ENCODE measurements at regions of chr12 and their contacts with region 1.

Region 1: DNA sequence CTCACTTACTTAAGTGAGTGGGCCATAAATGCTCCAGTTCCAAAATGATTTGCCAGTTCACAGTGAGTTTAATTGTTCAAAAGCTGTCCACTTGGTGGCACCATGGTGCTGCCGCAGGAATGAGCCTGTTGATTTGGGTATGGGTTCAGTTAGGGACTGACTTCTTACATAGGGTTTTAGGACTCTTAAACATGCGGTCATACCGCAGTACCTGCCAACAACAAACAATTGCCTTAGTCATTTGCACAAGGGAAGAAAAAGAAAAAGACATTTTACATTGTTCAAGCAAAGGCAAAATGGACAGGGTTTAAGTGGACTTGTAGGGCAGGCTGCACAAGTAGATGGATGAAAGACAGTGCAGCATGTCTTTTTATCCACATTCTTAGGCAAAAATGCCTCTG is 80.0 kb upstream of the DBX2 start:
- DNase-seq: peak; percentile 63
- ATAC-seq: peak; percentile 92
- H3K4me3 ChIP-seq: no peak overlapping the region
- H3K27ac ChIP-seq: no peak overlapping the region
- H3K4me1 ChIP-seq: no peaks in the 10 kb centered on the region
- H3K27me3 ChIP-seq: peaks cover 9% of the 10 kb centered on the region
- CTCF ChIP-seq: peak; percentile 73
- POLR2A ChIP-seq: no peak
- RAD21 ChIP-seq: peak; percentile 88

Region 2: GRCh38 chr12:45170456-45171042 is 39.7 kb after region 1 on chr12:
- CTCF ChIA-PET with region 1: no interaction called
- POLR2A ChIA-PET with region 1: no interaction called
- dilution Hi-C with region 1: no loop called
- in situ Hi-C with region 1: no loop called
- intact Hi-C with region 1: no loop called
- DNase-seq: peak; percentile 77
- ATAC-seq: peak; percentile 87
- H3K4me3 ChIP-seq: no peak overlapping the region
- H3K27ac ChIP-seq: no peak overlapping the region
- H3K4me1 ChIP-seq: no peaks in the 10 kb centered on the region
- H3K27me3 ChIP-seq: peaks cover 2% of the 10 kb centered on the region; the same call in 1 of the 2 replicates
- CTCF ChIP-seq: peak; percentile 88
- POLR2A ChIP-seq: no peak
- RAD21 ChIP-seq: peak; percentile 92

Region 3: DNA sequence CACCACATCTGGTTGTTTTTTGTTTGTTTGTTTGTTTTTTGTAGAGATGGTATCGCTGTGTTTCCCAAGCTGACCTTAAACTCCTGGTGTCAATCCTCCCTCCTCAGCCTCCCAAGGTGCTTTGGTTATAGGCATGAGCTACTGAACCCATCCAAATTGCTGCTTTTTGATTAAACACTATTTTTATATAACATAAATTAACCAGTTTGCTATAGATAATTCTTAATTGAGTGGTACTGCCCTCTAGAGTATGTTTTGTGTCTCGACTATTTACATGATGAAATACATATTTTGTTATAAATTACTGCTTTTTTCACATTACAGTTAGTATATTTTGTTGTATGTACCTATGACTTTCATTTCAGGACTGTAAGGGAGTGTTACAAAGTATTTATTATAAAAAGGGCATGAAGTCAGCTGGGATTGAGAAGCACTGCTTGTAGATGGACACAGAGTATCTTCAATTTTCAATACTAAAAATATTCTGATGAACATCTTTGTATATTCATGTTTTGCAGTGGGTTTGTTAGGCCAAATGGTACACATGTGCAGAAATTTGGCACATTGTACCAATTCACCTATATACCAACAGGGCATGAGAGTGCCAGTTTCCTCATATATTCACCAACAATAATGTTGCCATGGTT is 874.4 kb after region 1 on chr12:
- CTCF ChIA-PET with region 1: no interaction called
- POLR2A ChIA-PET with region 1: no interaction called
- dilution Hi-C with region 1: no loop called
- in situ Hi-C with region 1: no loop called
- intact Hi-C with region 1: loop called (anchors 2 kb)
- DNase-seq: peak; percentile 34
- ATAC-seq: no peak
- H3K4me3 ChIP-seq: no peak overlapping the region
- H3K27ac ChIP-seq: no peak overlapping the region
- H3K4me1 ChIP-seq: no peaks in the 10 kb centered on the region
- H3K27me3 ChIP-seq: peaks cover 16% of the 10 kb centered on the region
- CTCF ChIP-seq: peak; percentile 54
- POLR2A ChIP-seq: no peak
- RAD21 ChIP-seq: peak; percentile 44

Measured in IMR-90 (cell line).